IMR-90 (cell line): ENCODE measurements at regions of chr10 and their contacts with region 1.

Region 1: GRCh38 chr10:19702215-19702614 is 114.0 kb upstream of the PLXDC2 start:
- DNase-seq: peak; percentile 66
- ATAC-seq: peak; percentile 65
- H3K4me3 ChIP-seq: no peak overlapping the region
- H3K27ac ChIP-seq: no peak overlapping the region
- H3K4me1 ChIP-seq: peaks cover 12% of the 10 kb centered on the region
- H3K27me3 ChIP-seq: no peaks in the 10 kb centered on the region
- CTCF ChIP-seq: no peak
- POLR2A ChIP-seq: no peak
- RAD21 ChIP-seq: no peak

Region 2: GRCh38 chr10:19659920-19660655 is 42.1 kb before region 1 on chr10:
- CTCF ChIA-PET with region 1: no interaction called
- POLR2A ChIA-PET with region 1: no interaction called
- dilution Hi-C with region 1: no loop called
- in situ Hi-C with region 1: no loop called
- intact Hi-C with region 1: loop called (anchors 5 kb)
- DNase-seq: peak; percentile 37
- ATAC-seq: peak; percentile 80
- H3K4me3 ChIP-seq: no peak overlapping the region
- H3K27ac ChIP-seq: no peak overlapping the region
- H3K4me1 ChIP-seq: peaks cover 7% of the 10 kb centered on the region
- H3K27me3 ChIP-seq: no peaks in the 10 kb centered on the region
- CTCF ChIP-seq: no peak
- POLR2A ChIP-seq: no peak
- RAD21 ChIP-seq: no peak